GM12878 (cell line): ENCODE measurements at regions of chr5 and their contacts with region 1.

Region 1: DNA sequence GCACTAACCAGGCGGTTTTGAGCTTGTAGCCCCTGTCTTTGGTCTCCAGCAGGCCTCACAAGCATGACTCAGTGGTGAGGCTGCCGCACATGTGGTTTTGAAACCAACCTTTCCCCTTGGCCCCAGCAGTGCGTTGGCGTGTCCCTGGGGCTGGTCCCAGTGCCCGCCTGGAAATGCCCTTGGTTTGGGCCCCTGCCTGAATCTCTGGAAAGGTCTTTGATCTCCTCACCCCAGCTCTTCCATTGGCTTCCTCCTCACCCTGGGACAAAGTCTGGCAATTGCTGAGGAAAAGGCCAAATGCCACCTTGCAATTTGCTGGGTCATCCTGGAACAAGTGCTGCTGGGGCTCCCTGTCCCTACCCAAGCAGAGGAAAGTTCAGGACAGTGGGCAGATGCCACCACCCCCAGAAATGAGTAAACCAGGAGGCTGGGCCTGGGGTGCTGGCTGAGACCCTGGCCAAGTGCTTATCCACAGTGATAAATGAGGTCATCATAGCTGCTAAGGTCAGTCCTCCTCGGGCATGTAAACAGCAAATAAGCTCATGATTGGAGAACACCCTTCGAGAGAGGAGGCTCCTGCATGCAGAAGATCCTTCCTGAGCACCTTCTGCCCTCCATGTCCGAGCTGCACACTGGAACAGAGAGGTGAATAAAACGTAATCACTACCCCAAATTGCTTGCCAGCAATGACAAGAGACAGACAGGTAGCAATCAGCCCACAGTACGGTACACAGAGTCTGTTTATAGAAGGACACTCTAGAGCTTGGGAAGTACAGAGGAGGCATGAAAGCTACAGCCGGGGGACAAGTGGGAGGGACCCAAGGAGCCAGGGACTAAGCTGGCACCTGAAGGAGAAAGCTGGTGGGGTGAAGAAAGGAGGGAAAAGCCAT is 98.9 kb upstream of the CPEB4 start:
- DNase-seq: no peak
- ATAC-seq: peak; percentile 23; the same call in 2 of the 3 replicates
- H3K4me3 ChIP-seq: no peak overlapping the region
- H3K27ac ChIP-seq: no peak overlapping the region
- H3K4me1 ChIP-seq: peaks cover 50% of the 10 kb centered on the region
- H3K27me3 ChIP-seq: no peaks in the 10 kb centered on the region
- CTCF ChIP-seq: no peak
- EP300 ChIP-seq: no peak
- POLR2A ChIP-seq: no peak
- RAD21 ChIP-seq: no peak

Region 2: GRCh38 chr5:173643963-173644362 is 145.3 kb before region 1 on chr5:
- CTCF ChIA-PET with region 1: no interaction called
- POLR2A ChIA-PET with region 1: interaction called, 4 read pairs
- RAD21 ChIA-PET with region 1: interaction called, 11 read pairs
- SMC1A ChIA-PET with region 1: no interaction called
- in situ Hi-C with region 1: no loop called
- intact Hi-C with region 1: no loop called
- DNase-seq: peak; percentile 44
- ATAC-seq: peak; percentile 96
- H3K4me3 ChIP-seq: no peak overlapping the region
- H3K27ac ChIP-seq: no peak overlapping the region
- H3K4me1 ChIP-seq: peaks cover 12% of the 10 kb centered on the region
- H3K27me3 ChIP-seq: no peaks in the 10 kb centered on the region
- CTCF ChIP-seq: no peak
- EP300 ChIP-seq: no peak
- POLR2A ChIP-seq: no peak
- RAD21 ChIP-seq: no peak

Region 3: GRCh38 chr5:173745123-173745522 is 44.2 kb before region 1 on chr5:
- CTCF ChIA-PET with region 1: interaction called, 29 read pairs
- POLR2A ChIA-PET with region 1: interaction called, 14 read pairs
- RAD21 ChIA-PET with region 1: interaction called, 45 read pairs
- SMC1A ChIA-PET with region 1: interaction called, 60 read pairs
- in situ Hi-C with region 1: no loop called
- intact Hi-C with region 1: loop called (anchors 2 kb)
- DNase-seq: peak; percentile 47
- ATAC-seq: peak; percentile 64
- H3K4me3 ChIP-seq: no peak overlapping the region
- H3K27ac ChIP-seq: peak overlapping the region; percentile 95
- H3K4me1 ChIP-seq: peaks cover 54% of the 10 kb centered on the region
- H3K27me3 ChIP-seq: no peaks in the 10 kb centered on the region
- CTCF ChIP-seq: no peak
- EP300 ChIP-seq: no peak; a peak in 1 of 4 replicates
- POLR2A ChIP-seq: no peak
- RAD21 ChIP-seq: 0 out of 2 replicates have a peak, but pooled peaks have one; percentile 0

Region 4: DNA sequence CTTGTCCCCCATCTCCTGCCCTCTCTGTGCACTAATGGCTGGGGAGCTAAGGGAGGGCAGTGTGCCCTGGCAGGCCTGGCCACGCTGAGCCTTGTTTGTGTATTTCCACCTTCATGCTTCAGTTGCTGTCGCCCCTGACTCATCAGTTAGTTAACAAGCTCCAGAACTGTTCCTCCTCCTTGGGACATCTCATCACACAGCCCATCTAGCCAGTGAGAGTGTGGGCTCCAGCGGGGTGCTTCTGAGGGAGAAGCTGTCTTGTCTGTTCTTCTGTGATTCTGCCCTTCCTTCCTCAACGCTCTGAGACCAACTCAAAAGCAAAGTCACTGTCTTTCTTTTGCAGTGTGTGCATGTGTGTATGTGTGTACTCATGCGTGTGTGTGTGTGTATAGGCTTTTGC is 40.5 kb after region 1 on chr5:
- CTCF ChIA-PET with region 1: interaction called, 87 read pairs
- POLR2A ChIA-PET with region 1: interaction called, 36 read pairs
- RAD21 ChIA-PET with region 1: interaction called, 147 read pairs
- SMC1A ChIA-PET with region 1: interaction called, 271 read pairs
- in situ Hi-C with region 1: no loop called
- intact Hi-C with region 1: no loop called
- DNase-seq: no peak
- ATAC-seq: peak; percentile 73
- H3K4me3 ChIP-seq: no peak overlapping the region
- H3K27ac ChIP-seq: peak overlapping the region; percentile 58
- H3K4me1 ChIP-seq: peaks cover 36% of the 10 kb centered on the region
- H3K27me3 ChIP-seq: no peaks in the 10 kb centered on the region
- CTCF ChIP-seq: no peak
- EP300 ChIP-seq: no peak
- POLR2A ChIP-seq: no peak
- RAD21 ChIP-seq: 0 out of 2 replicates have a peak, but pooled peaks have one; percentile 2

Region 5: GRCh38 chr5:173902743-173903142 is 113.5 kb after region 1 on chr5:
- CTCF ChIA-PET with region 1: interaction called, 7 read pairs
- POLR2A ChIA-PET with region 1: interaction called, 3 read pairs
- RAD21 ChIA-PET with region 1: interaction called, 7 read pairs
- SMC1A ChIA-PET with region 1: interaction called, 15 read pairs
- in situ Hi-C with region 1: no loop called
- intact Hi-C with region 1: no loop called
- DNase-seq: no peak
- ATAC-seq: no peak
- H3K4me3 ChIP-seq: 0 out of 2 replicates have a peak overlapping the region, but pooled peaks have one; percentile 0
- H3K27ac ChIP-seq: peak overlapping the region; percentile 59
- H3K4me1 ChIP-seq: peaks cover 28% of the 10 kb centered on the region
- H3K27me3 ChIP-seq: no peaks in the 10 kb centered on the region
- CTCF ChIP-seq: no peak
- EP300 ChIP-seq: no peak
- POLR2A ChIP-seq: no peak
- RAD21 ChIP-seq: no peak

Region 6: GRCh38 chr5:174188295-174188694 is 399.0 kb after region 1 on chr5:
- CTCF ChIA-PET with region 1: no interaction called
- POLR2A ChIA-PET with region 1: no interaction called
- RAD21 ChIA-PET with region 1: no interaction called
- SMC1A ChIA-PET with region 1: no interaction called
- in situ Hi-C with region 1: no loop called
- intact Hi-C with region 1: no loop called
- DNase-seq: no peak
- ATAC-seq: no peak
- H3K4me3 ChIP-seq: no peak overlapping the region
- H3K27ac ChIP-seq: no peak overlapping the region
- H3K4me1 ChIP-seq: no peaks in the 10 kb centered on the region
- H3K27me3 ChIP-seq: peaks cover 0 to 6% of the 10 kb centered on the region in 2 experiments; a peak in 3 of 4 replicates
- CTCF ChIP-seq: no peak
- EP300 ChIP-seq: no peak
- POLR2A ChIP-seq: no peak
- RAD21 ChIP-seq: no peak